Activated CD4-positive, alpha-beta T cell treated with anti-CD3 and anti-CD28 coated beads for 36 hours (primary cell): ENCODE measurements at regions of chr16 and their contacts with region 1.

Region 1: GRCh38 chr16:77236063-77236511 is 36.9 kb downstream of the SYCE1L start:
- DNase-seq: peak; percentile 94
- ATAC-seq: peak; percentile 97
- H3K4me3 Mint-ChIP-seq: no peak overlapping the region
- H3K27ac Mint-ChIP-seq: no peak overlapping the region
- H3K4me1 Mint-ChIP-seq: peaks cover 3% of the 10 kb centered on the region
- H3K27me3 Mint-ChIP-seq: peaks cover 6% of the 10 kb centered on the region

Region 2: GRCh38 chr16:77246150-77246549 is 10.1 kb after region 1 on chr16:
- CTCF ChIA-PET with region 1: interaction called, 10 read pairs
- POLR2A ChIA-PET with region 1: no interaction called
- intact Hi-C with region 1: no loop called
- DNase-seq: no peak
- ATAC-seq: no peak
- H3K4me3 Mint-ChIP-seq: no peak overlapping the region
- H3K27ac Mint-ChIP-seq: no peak overlapping the region
- H3K4me1 Mint-ChIP-seq: no peaks in the 10 kb centered on the region
- H3K27me3 Mint-ChIP-seq: no peaks in the 10 kb centered on the region

Region 3: GRCh38 chr16:77376358-77376757 is 140.3 kb after region 1 on chr16:
- CTCF ChIA-PET with region 1: interaction called, 5 read pairs
- POLR2A ChIA-PET with region 1: no interaction called
- intact Hi-C with region 1: loop called (anchors 1 kb)
- DNase-seq: peak; percentile 15
- ATAC-seq: no peak
- H3K4me3 Mint-ChIP-seq: no peak overlapping the region
- H3K27ac Mint-ChIP-seq: no peak overlapping the region
- H3K4me1 Mint-ChIP-seq: no peaks in the 10 kb centered on the region
- H3K27me3 Mint-ChIP-seq: peaks cover 9% of the 10 kb centered on the region

Region 4: DNA sequence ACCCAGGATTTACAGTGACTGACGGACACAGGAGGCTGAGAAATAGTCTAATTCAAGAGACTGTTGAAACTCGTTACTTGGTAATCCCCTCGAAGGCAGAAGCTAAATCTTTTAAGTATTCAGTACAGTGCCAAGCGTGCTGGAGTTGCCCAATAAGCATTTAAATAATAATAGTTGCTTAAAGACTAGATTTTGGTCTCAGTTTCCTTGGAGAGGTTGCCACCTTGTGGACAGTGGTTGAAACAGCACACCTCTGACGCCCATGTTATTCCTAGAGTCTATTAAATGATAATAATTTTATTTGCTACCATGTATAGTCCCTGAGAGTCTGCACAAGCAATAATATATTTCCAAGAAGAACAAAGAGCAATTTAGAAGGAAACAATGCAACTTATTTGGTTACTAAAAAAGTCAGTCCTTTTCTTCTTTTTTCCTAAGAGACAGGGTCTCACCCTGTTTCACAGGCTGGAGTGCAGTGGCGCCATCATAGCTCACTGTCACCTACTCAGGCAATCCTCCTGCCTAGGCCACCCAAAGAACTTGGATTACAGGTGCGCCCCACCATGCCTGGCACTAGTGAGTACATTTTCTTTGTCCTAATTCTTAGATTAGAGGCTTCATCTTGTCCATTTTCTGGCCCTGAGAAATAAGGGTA is 348.2 kb after region 1 on chr16:
- CTCF ChIA-PET with region 1: interaction called, 153 read pairs
- POLR2A ChIA-PET with region 1: no interaction called
- intact Hi-C with region 1: loop called (anchors 1 kb)
- DNase-seq: peak; percentile 64
- ATAC-seq: peak; percentile 49
- H3K4me3 Mint-ChIP-seq: no peak overlapping the region
- H3K27ac Mint-ChIP-seq: no peak overlapping the region
- H3K4me1 Mint-ChIP-seq: peaks cover 7% of the 10 kb centered on the region
- H3K27me3 Mint-ChIP-seq: peaks cover 30% of the 10 kb centered on the region

Region 5: GRCh38 chr16:77971306-77972271 is 735.5 kb after region 1 on chr16:
- CTCF ChIA-PET with region 1: no interaction called
- POLR2A ChIA-PET with region 1: no interaction called
- intact Hi-C with region 1: loop called in 1 of 2 experiments (anchors 1 kb)
- DNase-seq: peak; percentile 89
- ATAC-seq: peak; percentile 70
- H3K4me3 Mint-ChIP-seq: no peak overlapping the region
- H3K27ac Mint-ChIP-seq: no peak overlapping the region
- H3K4me1 Mint-ChIP-seq: no peaks in the 10 kb centered on the region
- H3K27me3 Mint-ChIP-seq: peaks cover 4% of the 10 kb centered on the region